ENCODE measurements at regions of chr19 and their contacts with region 1.

Region 1: GRCh38 chr19:39870171-39870590 is 24.0 kb upstream of the FBL start:
- DNase-seq: no peak

Region 2: DNA sequence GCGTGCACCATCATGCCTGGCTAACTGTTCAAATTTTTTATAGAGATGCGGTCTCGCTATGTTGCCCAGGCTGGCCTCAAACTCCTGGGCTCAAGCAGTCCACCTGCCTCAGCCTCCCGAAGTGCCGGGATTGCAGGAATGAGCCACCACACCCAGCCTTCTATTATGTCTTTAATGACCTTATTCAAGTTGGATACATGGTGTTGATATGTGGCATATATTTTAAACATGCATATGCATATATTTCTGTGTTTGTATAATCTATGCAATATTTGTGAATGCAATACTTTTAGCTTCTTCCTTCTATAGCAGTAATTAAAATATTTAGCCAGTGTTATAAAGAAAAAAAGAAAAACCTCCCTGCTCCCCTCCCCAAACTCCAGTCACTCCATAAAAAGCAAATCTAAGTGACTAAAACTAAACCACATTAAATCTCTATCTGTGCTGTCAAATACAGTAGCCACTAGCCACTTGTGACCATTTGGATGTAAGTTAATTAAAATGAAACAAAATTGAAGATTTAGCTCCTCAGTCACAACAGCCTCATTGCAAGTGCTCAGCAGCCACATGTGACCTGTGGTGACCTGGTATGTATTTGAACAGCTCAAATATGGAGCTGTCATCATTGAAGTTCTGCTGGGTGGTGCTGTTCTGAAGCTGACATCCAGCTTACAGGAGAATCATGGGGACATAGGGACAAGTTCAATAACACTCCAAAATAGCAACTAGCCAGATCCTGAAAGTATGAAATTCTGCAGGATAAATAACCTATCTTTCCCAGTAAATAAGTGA is 36.8 kb after region 1 on chr19:
- intact Hi-C with region 1: loop called in 1 of 2 experiments (anchors 5 kb)
- DNase-seq: peak; percentile 6

Measured in posterior vena cava (tissue), 2 donors.